GM13976 (cell line): ENCODE measurements at regions of chr17 and their contacts with region 1.

Region 1: GRCh38 chr17:10618202-10618635 is 38.9 kb downstream of the MYH3 start:
- DNase-seq: peak; percentile 82
- CTCF ChIP-seq: peak; percentile 91

Region 2: GRCh38 chr17:9959377-9959981 is 658.7 kb before region 1 on chr17:
- in situ Hi-C with region 1: loop called (anchors 25 kb)
- DNase-seq: peak; percentile 84
- CTCF ChIP-seq: peak; percentile 55

Region 3: GRCh38 chr17:10327640-10328039 is 290.6 kb before region 1 on chr17:
- in situ Hi-C with region 1: loop called (anchors 10 kb)
- DNase-seq: peak; percentile 85
- CTCF ChIP-seq: peak; percentile 94

Region 4: DNA sequence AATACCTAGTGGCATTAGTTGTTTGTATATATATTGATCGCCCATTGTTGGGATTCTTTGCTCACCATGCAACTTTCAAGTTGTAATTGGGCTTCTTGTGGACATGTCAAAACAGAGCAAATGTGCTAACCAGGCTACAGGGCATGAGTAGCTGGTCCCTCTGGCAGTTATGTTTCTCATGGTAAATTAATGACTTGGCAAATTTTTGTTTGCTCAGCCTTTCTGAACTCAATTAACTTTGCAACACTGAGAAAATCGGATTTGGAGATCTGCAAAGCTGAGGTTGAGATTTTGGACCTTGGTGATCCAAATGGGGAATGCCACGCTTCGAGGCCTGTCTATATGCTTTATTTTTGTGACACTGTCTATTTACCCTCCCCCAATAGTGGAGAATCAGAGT is 358.2 kb after region 1 on chr17:
- in situ Hi-C with region 1: no loop called
- DNase-seq: no peak
- CTCF ChIP-seq: no peak